WTC11 (cell line): ENCODE measurements at regions of chr4 and their contacts with region 1.

Region 1: DNA sequence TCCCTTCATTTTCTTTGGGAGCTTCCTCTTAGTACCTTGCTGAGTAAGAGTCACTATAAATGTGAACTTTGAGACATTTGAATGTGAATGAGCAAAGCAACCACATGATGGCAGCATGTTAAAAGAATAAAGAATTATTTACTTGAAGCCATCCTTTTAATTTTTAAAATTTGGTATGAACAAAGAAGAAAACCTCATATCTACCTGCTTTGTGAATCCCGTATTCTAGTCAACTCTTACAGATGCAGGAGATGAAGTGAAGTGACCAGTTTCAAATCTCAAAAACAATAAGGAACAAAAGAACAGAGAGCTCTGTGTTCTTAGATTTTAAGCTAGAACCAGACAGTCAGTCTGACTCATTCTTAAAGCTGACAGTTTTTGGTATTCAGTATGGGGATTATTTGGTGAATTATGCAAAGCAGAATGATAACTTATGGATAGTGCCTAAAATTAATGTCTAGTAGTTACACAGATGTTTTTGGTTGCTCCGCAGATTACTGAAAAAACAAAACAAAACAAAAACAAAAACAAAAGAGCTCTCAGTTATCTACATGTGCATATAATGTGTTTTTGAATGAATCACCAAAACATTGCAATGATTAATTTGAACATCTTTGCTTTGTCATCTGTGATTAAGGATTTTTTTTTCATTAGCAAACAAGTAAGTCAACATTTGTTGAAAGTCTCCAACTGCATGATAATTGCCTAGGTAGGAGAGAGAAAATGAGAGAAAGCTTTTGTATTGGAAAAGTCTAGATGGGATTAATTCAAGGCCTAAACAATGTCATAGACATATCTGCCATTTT is 48.2 kb upstream of the H2AZ1 start:
- DNase-seq: no peak
- ATAC-seq: peak; percentile 47; the same call in 1 of the 2 replicates
- H3K4me3 Mint-ChIP-seq: no peak overlapping the region
- H3K27ac Mint-ChIP-seq: no peak overlapping the region
- H3K4me1 Mint-ChIP-seq: peaks cover 12% of the 10 kb centered on the region
- H3K27me3 Mint-ChIP-seq: no peaks in the 10 kb centered on the region
- CTCF ChIP-seq: no peak

Region 2: DNA sequence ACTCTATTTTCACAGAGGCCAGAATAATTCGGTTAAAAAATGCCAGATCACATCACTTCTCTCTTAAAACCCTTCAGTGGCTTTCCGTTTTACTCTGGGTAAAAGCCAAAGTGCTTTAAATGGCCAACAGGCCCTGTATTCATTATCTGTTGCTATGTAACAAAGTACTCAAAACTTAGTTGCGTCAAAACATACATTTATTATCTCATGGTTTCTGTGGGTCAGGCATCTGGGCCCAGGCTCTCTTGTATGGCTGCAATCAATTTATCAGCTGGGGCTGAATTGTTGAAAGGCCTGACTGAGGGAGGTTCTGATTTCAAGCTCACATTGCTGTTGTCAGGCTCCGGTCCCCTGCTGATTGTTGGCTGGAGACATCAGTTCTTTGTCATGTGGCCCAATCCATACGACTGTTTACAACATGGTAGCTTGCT is 24.5 kb after region 1 on chr4:
- CTCF ChIA-PET with region 1: interaction called, 10 read pairs
- POLR2A ChIA-PET with region 1: no interaction called
- DNase-seq: peak; percentile 29
- ATAC-seq: peak; percentile 87
- H3K4me3 Mint-ChIP-seq: no peak overlapping the region
- H3K27ac Mint-ChIP-seq: 0 out of 2 replicates have a peak overlapping the region, but pooled peaks have one; percentile 3
- H3K4me1 Mint-ChIP-seq: peaks cover 10% of the 10 kb centered on the region
- H3K27me3 Mint-ChIP-seq: no peaks in the 10 kb centered on the region
- CTCF ChIP-seq: no peak

Region 3: DNA sequence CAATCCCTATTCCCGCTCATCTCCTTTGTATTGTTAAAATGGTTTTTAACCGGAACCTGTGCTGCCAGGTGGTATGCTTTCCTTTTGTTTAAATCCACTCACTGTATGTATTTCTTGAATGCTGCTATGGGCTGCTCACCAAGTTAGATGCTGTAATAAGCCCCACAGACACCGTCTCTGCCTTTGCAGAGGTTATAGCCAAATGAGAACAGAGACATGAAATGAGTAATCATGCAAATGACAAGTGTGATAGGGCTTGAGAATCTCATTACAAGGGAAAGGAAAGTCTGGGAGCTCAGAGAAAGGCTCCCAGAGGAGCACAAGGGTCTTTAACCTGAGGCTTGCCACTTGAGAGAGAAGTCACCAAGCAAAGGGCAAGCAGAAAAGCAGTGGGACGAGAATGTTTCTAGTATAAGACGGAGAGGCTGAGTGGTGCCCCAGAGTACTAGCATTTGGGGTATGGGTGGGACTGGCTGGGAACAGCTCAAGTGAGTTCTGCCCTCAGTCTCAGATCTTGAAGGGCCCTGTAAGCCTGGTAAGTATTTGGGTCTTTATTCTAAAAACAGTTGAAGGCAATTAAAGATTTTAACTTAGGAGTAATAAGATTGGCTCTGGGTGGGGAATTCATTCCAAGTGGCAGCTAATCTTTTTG is 62.6 kb after region 1 on chr4:
- CTCF ChIA-PET with region 1: interaction called, 17 read pairs
- POLR2A ChIA-PET with region 1: no interaction called
- DNase-seq: no peak
- ATAC-seq: peak; percentile 50; the same call in 1 of the 2 replicates
- H3K4me3 Mint-ChIP-seq: no peak overlapping the region
- H3K27ac Mint-ChIP-seq: no peak overlapping the region
- H3K4me1 Mint-ChIP-seq: peaks cover 15% of the 10 kb centered on the region
- H3K27me3 Mint-ChIP-seq: no peaks in the 10 kb centered on the region; the same call in 1 of the 2 replicates
- CTCF ChIP-seq: no peak

Region 4: DNA sequence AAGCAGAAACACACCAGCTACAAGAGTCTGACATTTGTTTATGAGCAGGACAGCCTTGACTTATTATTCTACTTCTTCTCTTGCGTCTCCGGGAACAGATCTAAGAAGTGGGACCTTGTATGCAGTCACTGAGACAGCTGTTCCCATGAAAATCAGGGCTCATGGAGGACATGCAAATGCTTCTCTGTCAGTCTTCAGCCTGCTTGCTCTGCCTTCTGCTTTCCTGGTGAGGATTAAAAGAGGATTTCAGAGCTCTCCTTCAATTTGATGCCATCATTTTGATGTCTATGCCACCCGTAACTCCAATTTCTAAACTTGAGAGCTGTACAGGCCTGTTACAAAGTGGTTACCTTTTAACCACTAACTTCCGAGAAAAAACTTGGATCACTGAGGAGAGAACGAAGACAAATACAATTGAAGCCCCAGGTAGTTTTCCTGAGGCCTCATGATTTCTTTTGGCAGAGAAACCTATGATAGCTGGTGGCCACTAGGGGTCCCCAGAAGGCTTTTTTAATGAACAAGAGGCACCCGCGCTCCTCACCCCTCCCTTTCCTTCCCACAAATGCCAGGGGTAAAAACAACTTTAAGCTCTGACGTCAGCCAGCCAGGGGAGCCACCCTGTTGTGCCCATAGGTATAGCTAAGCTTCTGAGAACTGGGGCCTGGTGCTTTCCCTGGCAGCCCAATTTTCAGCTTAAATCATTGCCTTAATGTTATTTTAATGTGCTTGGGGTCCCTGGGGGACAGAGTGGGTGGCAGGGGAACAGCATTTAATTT is 95.0 kb after region 1 on chr4:
- CTCF ChIA-PET with region 1: interaction called, 42 read pairs
- POLR2A ChIA-PET with region 1: no interaction called
- DNase-seq: peak; percentile 80
- ATAC-seq: peak; percentile 96
- H3K4me3 Mint-ChIP-seq: no peak overlapping the region
- H3K27ac Mint-ChIP-seq: peak overlapping the region; percentile 96
- H3K4me1 Mint-ChIP-seq: peaks cover 49% of the 10 kb centered on the region
- H3K27me3 Mint-ChIP-seq: no peaks in the 10 kb centered on the region
- CTCF ChIP-seq: peak; percentile 66; the same call in 1 of the 2 replicates